Naive thymus-derived CD4-positive, alpha-beta T cell (primary cell): ENCODE measurements at regions of chr2 and their contacts with region 1.

Region 1: DNA sequence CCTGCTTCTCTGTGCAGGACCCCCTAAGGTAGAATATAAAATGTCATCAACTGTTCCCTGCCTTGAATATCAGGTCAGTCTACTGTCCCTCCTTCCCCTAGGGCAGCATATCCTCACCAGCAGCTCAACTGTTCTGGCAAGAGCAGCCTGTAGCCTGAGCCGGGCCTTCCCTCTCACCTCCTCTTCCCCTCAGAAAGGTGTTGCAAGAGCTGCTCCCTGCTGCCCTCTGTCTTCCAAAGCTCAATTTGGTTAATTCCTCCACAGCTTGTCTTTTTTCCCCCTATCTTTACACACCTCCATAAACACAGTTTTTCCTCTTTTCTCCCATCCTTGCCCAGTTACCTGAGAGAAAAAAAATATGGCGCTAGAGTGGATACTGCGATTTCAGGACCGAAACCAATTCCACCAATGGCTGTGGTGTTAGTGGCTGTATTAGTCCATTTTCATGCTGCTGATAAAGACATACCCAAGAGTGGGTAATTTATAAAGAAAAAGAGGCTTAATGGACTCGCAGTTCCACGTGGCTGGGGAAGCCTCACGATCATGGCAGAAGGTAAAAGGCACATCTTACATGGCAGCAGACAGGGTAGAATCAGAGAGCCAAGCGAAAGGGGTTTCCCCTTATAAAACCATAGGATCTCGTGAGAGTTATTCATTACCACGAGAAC is 184.7 kb downstream of the MREG start:
- DNase-seq: peak in 8 of 9 donors; percentile 8 to 46 (median 42)
- ATAC-seq: peak; percentile 80
- H3K4me3 ChIP-seq: no peak overlapping the region
- H3K4me3 Mint-ChIP-seq: no peak overlapping the region
- H3K27ac ChIP-seq: no peak overlapping the region
- H3K27ac Mint-ChIP-seq: peak overlapping the region in 1 of 9 donors; percentile 3
- H3K4me1 ChIP-seq: no peaks in the 10 kb centered on the region
- H3K4me1 Mint-ChIP-seq: peaks cover 0 to 11% (median 5%) of the 10 kb centered on the region in 7 donors
- H3K27me3 ChIP-seq: no peaks in the 10 kb centered on the region
- H3K27me3 Mint-ChIP-seq: peaks cover 0 to 13% (median 0%) of the 10 kb centered on the region in 5 donors

Region 2: GRCh38 chr2:215367662-215368492 is 460.8 kb before region 1 on chr2:
- CTCF ChIA-PET with region 1: no interaction called
- POLR2A ChIA-PET with region 1: no interaction called
- intact Hi-C with region 1: no loop called
- DNase-seq: no peak
- ATAC-seq: no peak
- H3K4me3 ChIP-seq: no peak overlapping the region
- H3K4me3 Mint-ChIP-seq: no peak overlapping the region
- H3K27ac ChIP-seq: no peak overlapping the region
- H3K27ac Mint-ChIP-seq: no peak overlapping the region
- H3K4me1 ChIP-seq: no peaks in the 10 kb centered on the region
- H3K4me1 Mint-ChIP-seq: peaks cover 0 to 2% (median 0%) of the 10 kb centered on the region in 7 donors
- H3K27me3 ChIP-seq: no peaks in the 10 kb centered on the region
- H3K27me3 Mint-ChIP-seq: no peaks in the 10 kb centered on the region

Region 3: GRCh38 chr2:215506604-215506990 is 322.1 kb before region 1 on chr2:
- CTCF ChIA-PET with region 1: no interaction called
- POLR2A ChIA-PET with region 1: no interaction called
- intact Hi-C with region 1: loop called in 1 of 2 experiments (anchors 1 kb)
- DNase-seq: no peak
- ATAC-seq: no peak
- H3K4me3 ChIP-seq: no peak overlapping the region
- H3K4me3 Mint-ChIP-seq: no peak overlapping the region
- H3K27ac ChIP-seq: no peak overlapping the region
- H3K27ac Mint-ChIP-seq: no peak overlapping the region
- H3K4me1 ChIP-seq: no peaks in the 10 kb centered on the region
- H3K4me1 Mint-ChIP-seq: peaks cover 0 to 11% (median 8%) of the 10 kb centered on the region in 7 donors
- H3K27me3 ChIP-seq: no peaks in the 10 kb centered on the region
- H3K27me3 Mint-ChIP-seq: peaks cover 0 to 12% (median 7%) of the 10 kb centered on the region in 5 donors

Region 4: GRCh38 chr2:215920244-215921100 is 91.8 kb after region 1 on chr2:
- CTCF ChIA-PET with region 1: no interaction called
- POLR2A ChIA-PET with region 1: no interaction called
- intact Hi-C with region 1: loop called in 1 of 2 experiments (anchors 1 kb)
- DNase-seq: peak; percentile 19 to 62 (median 45)
- ATAC-seq: peak; percentile 88
- H3K4me3 ChIP-seq: no peak overlapping the region
- H3K4me3 Mint-ChIP-seq: no peak overlapping the region
- H3K27ac ChIP-seq: no peak overlapping the region
- H3K27ac Mint-ChIP-seq: no peak overlapping the region
- H3K4me1 ChIP-seq: no peaks in the 10 kb centered on the region
- H3K4me1 Mint-ChIP-seq: peaks cover 0 to 5% (median 0%) of the 10 kb centered on the region in 7 donors
- H3K27me3 ChIP-seq: no peaks in the 10 kb centered on the region
- H3K27me3 Mint-ChIP-seq: peaks cover 0 to 14% (median 7%) of the 10 kb centered on the region in 5 donors